Right lobe of liver (tissue), 6 donors: ENCODE measurements at regions of chr15 and their contacts with region 1.

Region 1: DNA sequence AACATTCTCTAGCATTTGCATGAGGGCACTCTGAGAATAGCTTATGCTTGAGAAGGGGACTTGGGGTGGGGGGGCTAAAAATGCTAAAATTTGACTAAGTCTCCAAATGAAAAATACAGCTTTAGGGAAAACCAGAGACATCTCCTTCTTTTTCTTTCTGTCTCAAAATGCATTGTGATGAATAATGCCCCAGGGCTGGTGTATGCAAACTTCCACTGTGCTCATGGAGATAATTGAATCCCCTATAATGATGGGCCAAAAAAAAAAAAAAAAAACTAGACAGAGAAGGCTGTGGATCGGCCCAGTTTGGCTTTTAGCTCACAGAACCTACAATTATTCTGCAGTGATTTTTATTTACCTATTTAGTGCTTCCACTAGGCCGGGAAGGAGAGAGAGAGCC is 147.9 kb upstream of the RORA start:
- DNase-seq: no peak
- ATAC-seq: no peak
- H3K4me3 ChIP-seq: no peak overlapping the region
- H3K27ac ChIP-seq: no peak overlapping the region
- H3K4me1 ChIP-seq: peaks cover 0 to 29% (median 7%) of the 10 kb centered on the region in 4 donors
- H3K27me3 ChIP-seq: no peaks in the 10 kb centered on the region
- CTCF ChIP-seq: no peak
- POLR2A ChIP-seq: no peak

Region 2: DNA sequence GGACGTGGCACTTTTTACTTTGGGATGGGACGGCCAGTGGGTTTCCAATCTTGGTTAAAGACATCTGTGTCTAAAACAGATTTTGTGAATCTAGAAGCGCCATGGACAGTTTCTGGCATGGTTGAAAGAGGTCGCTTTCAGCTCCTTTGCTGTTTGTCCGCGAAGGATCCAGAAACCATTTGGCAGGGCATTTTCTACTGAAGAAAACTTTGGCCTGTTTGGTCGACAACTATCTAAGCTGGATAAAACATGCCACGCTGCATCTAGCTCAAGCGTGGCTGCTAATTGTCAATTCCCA is 147.1 kb before region 1 on chr15:
- intact Hi-C with region 1: loop called in 1 of 2 experiments (anchors 10 kb)
- DNase-seq: no peak
- ATAC-seq: no peak
- H3K4me3 ChIP-seq: peak overlapping the region; percentile 54 to 67 (median 63)
- H3K27ac ChIP-seq: peak overlapping the region; percentile 4 to 24 (median 20)
- H3K4me1 ChIP-seq: peaks cover 0 to 10% (median 0%) of the 10 kb centered on the region in 4 donors
- H3K27me3 ChIP-seq: no peaks in the 10 kb centered on the region
- CTCF ChIP-seq: no peak
- POLR2A ChIP-seq: no peak

Region 3: DNA sequence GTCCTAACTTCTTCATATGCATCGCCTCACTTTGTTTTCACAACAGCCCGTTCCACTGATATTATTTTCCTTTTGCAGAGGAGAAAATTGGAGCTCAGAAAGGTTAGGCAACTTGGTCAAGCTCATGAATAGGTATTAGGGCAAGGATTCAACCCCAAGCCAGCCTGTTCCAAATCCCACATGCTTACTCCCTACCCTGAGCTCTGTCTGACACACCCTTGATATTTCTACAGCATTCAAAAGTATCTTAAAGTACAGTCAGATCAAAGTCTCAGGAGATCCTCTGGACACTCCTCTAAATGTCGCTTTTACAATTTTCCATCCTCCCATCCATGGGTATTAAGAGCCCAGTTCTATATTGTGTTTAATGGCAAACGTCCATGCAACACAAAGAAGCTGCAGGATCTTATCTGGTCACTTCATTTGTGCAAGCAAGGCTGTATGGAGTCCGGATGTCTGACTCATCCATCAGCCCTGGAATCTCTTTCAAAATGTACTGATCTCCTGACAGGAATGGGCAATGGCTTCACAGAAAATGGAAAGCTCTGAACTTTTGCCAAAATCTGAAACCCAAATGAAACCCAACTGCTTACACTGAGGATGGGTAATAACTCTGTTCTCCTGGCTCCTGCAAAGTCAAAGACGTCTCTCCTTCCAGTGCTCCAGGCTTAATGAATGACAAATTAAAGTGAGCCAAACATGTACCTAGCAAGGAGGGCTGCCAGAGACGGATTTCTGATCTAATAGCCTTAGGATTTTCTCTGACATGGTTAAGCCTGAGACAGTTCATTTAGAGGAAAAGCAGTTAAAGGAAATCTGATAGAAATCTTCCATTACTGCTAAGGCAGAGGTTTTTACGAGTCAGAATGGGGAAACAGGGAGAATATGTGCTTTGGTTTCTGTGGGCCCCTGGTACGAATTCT is 83.1 kb after region 1 on chr15:
- intact Hi-C with region 1: no loop called
- DNase-seq: no peak
- ATAC-seq: peak; percentile 10 to 72 (median 38)
- H3K4me3 ChIP-seq: no peak overlapping the region
- H3K27ac ChIP-seq: no peak overlapping the region
- H3K4me1 ChIP-seq: peaks cover 0 to 26% (median 9%) of the 10 kb centered on the region in 4 donors
- H3K27me3 ChIP-seq: no peaks in the 10 kb centered on the region
- CTCF ChIP-seq: no peak
- POLR2A ChIP-seq: peak; percentile 28